ENCODE measurements at regions of chr6 and their contacts with region 1.

Region 1: DNA sequence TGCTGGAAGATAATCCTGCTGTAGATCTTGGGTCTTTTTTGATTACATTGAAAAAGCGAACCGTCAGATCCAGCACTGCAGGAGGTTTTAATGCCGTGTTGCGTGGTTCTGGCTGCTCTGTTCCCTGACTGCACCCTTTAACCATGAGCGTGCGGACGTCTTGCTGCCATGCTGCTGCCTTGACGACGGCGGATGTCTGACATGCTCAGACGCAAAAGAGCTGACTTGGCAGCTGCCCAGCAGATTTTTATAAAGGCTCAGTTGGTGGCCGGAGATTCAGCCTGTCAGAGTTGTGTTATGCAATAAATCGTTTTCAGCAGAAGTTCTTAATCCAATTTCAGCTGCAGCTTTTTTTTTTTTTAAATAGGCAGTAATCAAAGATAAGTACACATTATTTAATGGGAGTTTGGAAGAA is 119.4 kb downstream of the JARID2 start:
- DNase-seq: peak; percentile 34 to 61
- H3K4me3 ChIP-seq: no peak overlapping the region
- H3K27ac ChIP-seq: no peak overlapping the region
- H3K4me1 ChIP-seq: peaks cover 0 to 5% of the 10 kb centered on the region in 2 donors
- H3K27me3 ChIP-seq: no peaks in the 10 kb centered on the region
- CTCF ChIP-seq: no peak
- POLR2A ChIP-seq: no peak

Region 2: DNA sequence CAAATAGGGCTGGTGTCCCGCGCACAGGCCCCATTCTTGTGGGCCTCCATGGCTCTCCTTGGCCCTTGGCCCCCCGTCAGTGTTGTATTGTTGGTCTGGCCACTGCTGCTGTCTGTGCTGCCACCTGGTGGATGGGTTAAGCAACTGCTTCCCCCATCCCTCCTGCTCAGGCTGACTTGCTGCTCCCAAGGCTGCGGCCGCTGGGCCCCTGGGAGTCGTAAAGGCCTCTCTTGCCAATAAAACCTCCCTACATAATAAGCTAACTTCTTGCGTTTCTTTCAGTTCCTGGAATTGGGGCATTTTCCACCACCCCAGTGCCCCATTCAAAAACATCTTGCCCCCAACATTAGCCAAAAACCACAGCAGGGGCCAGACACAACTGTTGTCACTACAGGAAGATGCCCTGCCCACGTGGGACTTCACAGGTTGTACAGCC is 1220.6 kb before region 1 on chr6:
- intact Hi-C with region 1: loop called (anchors 5 kb)
- DNase-seq: peak in 1 of 2 donors; percentile 57
- H3K4me3 ChIP-seq: no peak overlapping the region
- H3K27ac ChIP-seq: no peak overlapping the region
- H3K4me1 ChIP-seq: no peaks in the 10 kb centered on the region
- H3K27me3 ChIP-seq: no peaks in the 10 kb centered on the region
- CTCF ChIP-seq: peak; percentile 63 to 79 (median 69)
- POLR2A ChIP-seq: no peak

Region 3: GRCh38 chr6:15310680-15311079 is 54.6 kb before region 1 on chr6:
- intact Hi-C with region 1: loop called (anchors 2 kb)
- DNase-seq: no peak
- H3K4me3 ChIP-seq: no peak overlapping the region
- H3K27ac ChIP-seq: no peak overlapping the region
- H3K4me1 ChIP-seq: peaks cover 0 to 5% of the 10 kb centered on the region in 2 donors
- H3K27me3 ChIP-seq: no peaks in the 10 kb centered on the region
- CTCF ChIP-seq: no peak
- POLR2A ChIP-seq: no peak